ENCODE measurements at regions of chr1 and their contacts with region 1.

Region 1: DNA sequence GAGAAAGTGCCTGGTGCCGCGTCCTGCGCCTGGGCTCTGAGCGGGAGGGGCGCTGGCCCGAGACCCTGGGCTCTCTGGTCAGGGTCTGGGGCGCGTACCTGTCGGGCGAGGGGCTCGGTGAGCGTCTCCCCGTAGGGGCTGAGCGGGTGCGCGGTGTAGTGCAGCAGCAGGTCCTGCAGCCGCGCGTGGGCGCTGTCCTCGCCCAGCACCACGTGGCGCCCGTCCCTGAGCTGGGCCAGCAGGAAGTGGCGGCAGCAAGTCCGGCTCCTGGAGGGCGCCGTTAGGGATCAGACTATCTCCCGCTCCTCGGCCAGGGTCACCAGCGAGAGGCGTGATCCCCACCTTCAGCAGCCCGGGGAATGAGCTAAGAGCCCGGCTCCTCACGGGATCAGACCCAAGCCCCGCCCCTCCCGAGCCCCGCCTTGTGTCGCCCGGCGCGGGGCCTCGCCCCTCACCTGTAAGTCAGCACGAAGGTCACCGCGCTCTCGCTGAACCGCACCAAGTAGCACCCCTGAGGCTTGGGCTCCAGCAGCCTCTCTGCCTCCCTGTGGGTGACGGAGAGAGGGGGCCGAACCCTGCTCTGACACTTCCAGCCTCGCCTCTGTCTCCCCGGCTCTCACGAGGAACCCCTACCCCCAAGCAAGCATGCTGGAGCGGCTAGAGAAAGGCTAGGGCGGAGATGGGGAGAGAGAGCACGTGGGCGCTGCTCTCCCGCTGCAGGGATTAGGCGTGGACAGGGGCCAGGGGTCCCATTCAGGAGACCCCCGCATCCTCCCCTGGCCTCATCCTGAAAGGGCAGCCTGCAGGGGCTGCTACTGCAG is 2.7 kb downstream of the SH2D2A start:
- DNase-seq: peak; percentile 77 to 86 (median 81)
- H3K4me3 ChIP-seq: peak overlapping the region; percentile 68
- H3K4me3 Mint-ChIP-seq: peak overlapping the region; percentile 85 to 98 (median 94)
- H3K27ac ChIP-seq: peak overlapping the region; percentile 97
- H3K27ac Mint-ChIP-seq: peak overlapping the region; percentile 88 to 100 (median 99)
- H3K4me1 ChIP-seq: peaks cover 60% of the 10 kb centered on the region
- H3K4me1 Mint-ChIP-seq: peaks cover 61 to 83% (median 64%) of the 10 kb centered on the region in 3 donors
- H3K27me3 ChIP-seq: no peaks in the 10 kb centered on the region
- H3K27me3 Mint-ChIP-seq: peaks cover 0 to 13% of the 10 kb centered on the region in 2 donors

Region 2: DNA sequence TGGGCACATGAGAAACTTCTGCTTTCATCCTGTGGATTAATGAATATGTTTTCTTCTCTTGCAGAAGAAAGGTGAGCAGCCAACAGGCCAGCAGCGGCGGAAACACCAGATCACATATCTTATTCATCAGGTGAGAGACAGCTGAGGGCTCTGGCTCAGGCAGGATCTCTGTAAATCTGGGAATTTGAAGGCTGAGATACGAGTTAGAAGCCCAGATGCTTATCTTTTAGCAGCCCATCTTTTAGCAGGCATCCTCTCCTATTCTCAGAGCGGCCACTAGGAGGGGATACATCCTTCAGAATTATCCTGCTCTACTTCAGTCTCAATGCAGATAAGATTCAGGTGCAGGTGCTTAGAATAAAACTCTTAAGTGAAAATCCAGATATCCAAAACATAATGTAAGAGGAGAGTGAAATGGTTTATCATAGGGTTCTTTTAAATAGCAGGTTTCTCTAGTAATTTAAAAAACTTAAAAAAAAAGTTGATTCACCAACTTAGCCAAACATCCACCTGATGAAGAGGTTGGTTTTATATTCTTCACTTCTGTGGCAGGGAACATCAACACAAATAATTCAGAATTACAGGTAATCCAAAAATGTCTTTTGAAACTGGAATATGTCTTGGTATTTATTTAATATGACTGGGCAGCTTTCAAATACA is 16.6 kb before region 1 on chr1:
- CTCF ChIA-PET with region 1: interaction called, 16 read pairs
- POLR2A ChIA-PET with region 1: interaction called, 3 read pairs
- DNase-seq: peak; percentile 35 to 70 (median 56)
- H3K4me3 ChIP-seq: no peak overlapping the region
- H3K4me3 Mint-ChIP-seq: no peak overlapping the region
- H3K27ac ChIP-seq: no peak overlapping the region
- H3K27ac Mint-ChIP-seq: peak overlapping the region in 5 of 8 donors; percentile 21 to 72 (median 52)
- H3K4me1 ChIP-seq: no peaks in the 10 kb centered on the region
- H3K4me1 Mint-ChIP-seq: peaks cover 17 to 28% (median 18%) of the 10 kb centered on the region in 3 donors
- H3K27me3 ChIP-seq: no peaks in the 10 kb centered on the region
- H3K27me3 Mint-ChIP-seq: peaks cover 0 to 5% of the 10 kb centered on the region in 2 donors

Region 3: DNA sequence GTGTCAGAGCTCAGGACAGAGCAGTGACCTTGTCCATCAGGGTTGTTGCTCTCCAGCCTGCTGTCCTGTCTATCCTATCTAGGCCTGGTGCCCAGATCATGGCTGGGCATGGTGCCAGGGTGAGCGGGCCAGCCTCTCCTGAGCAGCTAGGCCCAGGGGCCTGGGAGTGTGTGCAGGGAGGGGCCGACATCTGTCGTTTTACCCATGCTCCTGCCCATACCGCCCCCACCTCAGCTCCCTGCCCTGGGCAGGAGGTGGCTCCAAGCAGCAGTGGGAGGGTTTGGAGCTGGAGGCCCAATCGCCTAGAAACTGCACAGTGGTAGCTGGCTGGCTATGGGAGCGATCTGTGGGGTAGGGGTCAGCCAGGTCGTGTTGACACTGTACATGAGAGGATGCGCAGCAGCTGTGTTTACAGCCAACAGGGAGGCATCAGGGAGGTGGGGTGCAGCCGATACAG is 38.5 kb after region 1 on chr1:
- CTCF ChIA-PET with region 1: interaction called, 11 read pairs
- POLR2A ChIA-PET with region 1: no interaction called
- DNase-seq: no peak
- H3K4me3 ChIP-seq: no peak overlapping the region
- H3K4me3 Mint-ChIP-seq: no peak overlapping the region
- H3K27ac ChIP-seq: no peak overlapping the region
- H3K27ac Mint-ChIP-seq: no peak overlapping the region
- H3K4me1 ChIP-seq: peaks cover 9% of the 10 kb centered on the region
- H3K4me1 Mint-ChIP-seq: peaks cover 12 to 20% (median 14%) of the 10 kb centered on the region in 3 donors
- H3K27me3 ChIP-seq: no peaks in the 10 kb centered on the region
- H3K27me3 Mint-ChIP-seq: peaks cover 4 to 6% of the 10 kb centered on the region in 2 donors